Posterior cingulate gyrus (tissue), 11 donors: ENCODE measurements at regions of chr9 and their contacts with region 1.

Region 1: DNA sequence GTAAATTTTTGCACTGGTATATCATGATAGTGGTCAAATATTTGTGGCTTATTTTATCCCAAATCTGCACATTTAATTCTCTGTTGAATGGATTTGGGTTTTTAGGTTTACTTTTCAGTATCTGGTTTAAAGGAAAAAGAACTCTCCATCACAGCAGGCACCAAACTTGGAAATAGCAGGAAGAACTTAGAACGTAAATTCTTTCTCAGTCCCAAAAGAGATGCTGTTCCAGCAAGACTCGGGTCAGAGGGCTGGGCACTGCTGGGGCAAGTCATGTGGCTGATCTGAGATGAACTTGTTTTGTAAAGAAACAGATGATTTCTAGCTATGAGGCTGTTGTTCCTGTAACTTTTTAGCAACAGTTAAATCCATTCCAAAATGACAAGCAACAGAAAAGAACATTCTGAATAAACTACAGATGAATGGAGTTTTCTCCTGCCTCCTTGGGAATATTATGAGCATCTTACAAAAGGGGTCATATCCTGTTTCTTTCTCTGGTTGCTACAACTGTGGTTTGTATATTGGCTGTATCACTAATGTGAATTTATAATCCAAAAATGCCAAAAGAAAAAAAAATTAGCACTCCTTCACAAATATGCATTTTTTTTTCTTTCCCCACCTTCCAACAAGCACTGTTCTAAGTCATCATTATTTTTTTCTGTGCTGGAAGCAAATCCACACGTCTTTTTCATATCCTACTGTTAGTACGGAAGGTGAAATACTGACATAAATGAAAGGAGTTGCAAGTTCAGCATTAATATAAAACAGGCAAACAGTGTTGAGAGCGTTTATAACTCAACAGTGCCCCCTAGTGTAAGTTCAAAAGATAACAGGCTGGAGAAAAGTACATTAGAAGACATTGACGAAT is 31.1 kb downstream of the OR2K2 start:
- DNase-seq: peak in 6 of 10 donors; percentile 20 to 87 (median 40)

Region 2: DNA sequence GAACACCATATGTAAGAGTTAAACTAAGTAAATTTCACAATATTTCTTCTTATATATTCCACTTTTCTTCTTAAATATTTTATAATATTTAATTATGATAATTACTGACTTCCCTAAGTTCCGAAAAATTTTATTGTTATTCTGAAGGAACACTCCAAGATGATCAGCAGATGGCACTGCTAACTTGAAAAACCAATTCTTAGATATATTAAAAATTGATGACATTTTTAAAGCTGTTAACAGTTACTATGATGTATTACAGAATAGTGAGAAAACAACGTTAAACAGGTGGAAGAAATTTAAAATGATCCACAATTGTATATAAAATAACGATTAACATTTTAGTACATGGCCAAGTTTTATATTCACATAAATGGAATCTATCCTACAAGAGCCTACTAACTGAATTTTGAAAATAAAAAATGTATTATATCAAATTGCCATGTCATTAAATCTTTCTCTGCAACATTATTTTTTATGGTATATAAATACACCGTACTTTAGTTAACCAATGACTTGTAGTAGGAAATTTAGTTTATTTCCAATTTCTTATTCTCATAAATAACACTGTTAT is 660.5 kb before region 1 on chr9:
- intact Hi-C with region 1: loop called (anchors 2 kb)
- DNase-seq: no peak

Region 3: DNA sequence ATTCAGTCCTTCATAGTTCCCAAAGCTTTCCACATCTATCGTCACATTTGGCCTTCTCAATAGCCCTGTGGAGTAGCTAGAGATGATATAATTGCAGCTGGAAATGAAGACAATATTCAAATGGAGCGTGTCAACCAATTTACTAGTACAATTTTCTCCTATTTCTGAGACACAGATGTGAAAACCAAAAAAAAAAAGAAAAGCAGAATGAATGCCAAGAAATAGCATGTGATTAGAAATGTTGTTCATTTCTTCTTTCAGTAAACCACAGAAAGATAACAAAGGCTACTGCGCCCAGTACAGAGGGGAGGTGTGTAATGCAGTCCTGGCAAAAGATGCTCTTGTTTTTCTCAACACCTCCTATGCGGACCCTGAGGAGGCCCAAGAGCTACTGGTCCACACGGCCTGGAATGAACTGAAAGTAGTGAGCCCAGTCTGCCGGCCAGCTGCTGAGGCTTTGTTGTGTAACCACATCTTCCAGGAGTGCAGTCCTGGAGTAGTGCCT is 531.4 kb before region 1 on chr9:
- intact Hi-C with region 1: loop called (anchors 10 kb)
- DNase-seq: peak in 5 of 10 donors; percentile 8 to 85 (median 36)

Region 4: DNA sequence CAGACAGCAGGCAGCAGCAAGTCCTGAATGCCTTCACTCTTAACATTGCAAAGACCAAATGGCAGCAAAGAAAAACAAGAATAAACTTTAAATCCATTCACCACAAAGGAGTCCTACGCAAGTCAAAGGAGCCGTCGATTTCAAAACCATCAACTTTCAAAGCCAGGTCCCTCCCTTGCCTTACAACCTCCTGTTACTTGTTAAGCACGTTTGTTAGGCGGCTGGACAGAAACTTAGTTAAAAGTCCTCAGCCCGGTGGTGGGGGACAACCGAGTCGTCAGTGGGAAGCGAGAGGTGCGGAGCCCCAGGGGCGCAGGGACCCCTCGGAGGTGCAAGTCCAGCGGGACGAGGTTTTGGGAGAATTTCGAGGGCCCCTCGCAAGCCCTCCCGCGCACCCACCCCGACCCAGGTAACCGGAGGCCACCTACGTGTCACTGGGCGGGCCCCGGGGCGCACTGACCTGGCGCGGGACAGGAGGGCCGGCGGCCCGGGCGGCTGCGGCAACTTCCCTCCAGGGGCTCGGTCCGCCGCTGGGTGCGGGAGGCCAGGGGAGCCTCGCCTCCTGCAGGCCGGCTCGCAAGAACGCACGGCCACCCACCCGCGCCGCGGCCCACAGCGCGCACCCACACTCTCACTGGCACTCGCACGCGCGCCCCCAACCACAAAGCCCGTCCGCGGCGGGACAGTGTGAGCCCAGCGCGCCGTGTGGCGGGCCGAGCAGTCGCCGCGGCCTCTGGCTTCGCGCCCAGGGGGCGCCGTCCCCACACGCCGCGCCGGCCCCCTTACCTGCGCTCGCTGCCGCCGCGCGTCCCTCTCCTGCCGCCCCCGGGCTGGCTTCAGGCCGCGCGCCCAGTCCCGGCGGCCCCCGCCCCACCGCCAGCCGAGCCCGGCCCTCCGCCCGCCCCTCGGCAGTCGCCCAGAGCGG is 261.3 kb before region 1 on chr9:
- intact Hi-C with region 1: loop called (anchors 2 kb)
- DNase-seq: peak in 7 of 10 donors; percentile 8 to 88 (median 57)

Region 5: GRCh38 chr9:111691672-111692329 is 392.8 kb after region 1 on chr9:
- intact Hi-C with region 1: no loop called
- DNase-seq: no peak